ENCODE measurements at regions of chr2 and their contacts with region 1.

Region 1: DNA sequence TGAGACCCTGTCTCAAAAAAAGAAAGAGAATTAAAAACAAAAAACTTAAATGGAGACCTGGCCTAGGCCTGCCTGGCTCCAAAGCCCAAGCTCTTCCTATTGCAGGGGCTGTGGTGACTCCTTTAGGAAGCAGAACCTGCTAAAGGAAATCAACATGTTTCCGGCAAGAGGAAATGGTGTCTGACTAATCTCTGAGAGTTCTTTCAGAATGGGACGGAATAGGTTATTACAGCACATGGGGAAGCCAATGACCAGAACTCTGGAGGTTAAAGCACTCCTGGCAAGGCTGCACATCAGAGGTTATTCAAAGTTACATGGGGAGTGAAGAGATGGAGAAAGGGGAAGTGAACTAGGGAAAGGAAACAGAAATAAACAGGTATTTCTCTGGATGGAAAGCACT is 21.4 kb downstream of the KIF3C start:
- DNase-seq: no peak
- ATAC-seq: no peak
- H3K4me3 ChIP-seq: no peak overlapping the region
- H3K4me3 Mint-ChIP-seq: no peak overlapping the region
- H3K27ac ChIP-seq: no peak overlapping the region
- H3K27ac Mint-ChIP-seq: peak overlapping the region; percentile 8
- H3K4me1 ChIP-seq: peaks cover 10 to 14% of the 10 kb centered on the region in 2 donors
- H3K4me1 Mint-ChIP-seq: peaks cover 8% of the 10 kb centered on the region
- H3K27me3 ChIP-seq: no peaks in the 10 kb centered on the region
- H3K27me3 Mint-ChIP-seq: no peaks in the 10 kb centered on the region
- CTCF ChIP-seq: no peak

Region 2: DNA sequence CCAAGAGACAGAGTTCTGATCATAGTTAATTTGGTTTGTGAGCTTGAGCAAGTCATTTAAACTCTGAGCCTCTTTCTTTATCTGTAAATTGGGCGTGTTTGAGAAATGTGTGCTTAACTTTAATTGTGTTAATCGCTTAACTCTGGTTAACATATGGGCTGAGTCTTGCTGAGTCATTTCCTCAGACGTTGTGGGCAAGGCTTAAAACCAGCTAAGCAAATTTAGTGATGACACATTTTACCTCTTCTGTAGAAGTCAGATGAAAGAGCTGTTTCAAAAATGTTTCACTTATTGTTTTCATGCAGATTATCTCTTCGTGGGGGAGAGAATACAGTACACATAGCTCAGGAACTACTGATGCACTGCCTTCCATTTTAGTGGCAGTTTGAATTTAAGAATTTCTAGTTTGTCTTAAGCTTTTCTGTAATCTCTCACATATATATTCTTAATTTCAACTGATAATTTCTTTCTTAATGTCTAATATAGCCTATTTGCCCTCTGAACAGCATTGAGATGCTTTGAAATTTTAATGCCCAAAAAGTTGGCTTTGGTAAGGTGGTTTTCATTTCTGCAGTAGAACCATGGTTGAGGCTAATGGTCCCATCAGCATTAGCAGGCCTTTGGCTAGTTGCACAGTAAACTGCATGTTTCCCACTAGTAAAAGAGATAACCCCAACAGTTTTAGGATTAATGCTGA is 107.8 kb after region 1 on chr2:
- CTCF ChIA-PET with region 1: no interaction called
- POLR2A ChIA-PET with region 1: interaction called, 11 read pairs
- intact Hi-C with region 1: no loop called
- DNase-seq: peak; percentile 6
- ATAC-seq: no peak
- H3K4me3 ChIP-seq: no peak overlapping the region
- H3K4me3 Mint-ChIP-seq: no peak overlapping the region
- H3K27ac ChIP-seq: no peak overlapping the region
- H3K27ac Mint-ChIP-seq: no peak overlapping the region
- H3K4me1 ChIP-seq: peaks cover 19 to 22% of the 10 kb centered on the region in 2 donors
- H3K4me1 Mint-ChIP-seq: peaks cover 43% of the 10 kb centered on the region
- H3K27me3 ChIP-seq: no peaks in the 10 kb centered on the region
- H3K27me3 Mint-ChIP-seq: no peaks in the 10 kb centered on the region
- CTCF ChIP-seq: no peak